ENCODE measurements at regions of chr10 and their contacts with region 1.

Region 1: DNA sequence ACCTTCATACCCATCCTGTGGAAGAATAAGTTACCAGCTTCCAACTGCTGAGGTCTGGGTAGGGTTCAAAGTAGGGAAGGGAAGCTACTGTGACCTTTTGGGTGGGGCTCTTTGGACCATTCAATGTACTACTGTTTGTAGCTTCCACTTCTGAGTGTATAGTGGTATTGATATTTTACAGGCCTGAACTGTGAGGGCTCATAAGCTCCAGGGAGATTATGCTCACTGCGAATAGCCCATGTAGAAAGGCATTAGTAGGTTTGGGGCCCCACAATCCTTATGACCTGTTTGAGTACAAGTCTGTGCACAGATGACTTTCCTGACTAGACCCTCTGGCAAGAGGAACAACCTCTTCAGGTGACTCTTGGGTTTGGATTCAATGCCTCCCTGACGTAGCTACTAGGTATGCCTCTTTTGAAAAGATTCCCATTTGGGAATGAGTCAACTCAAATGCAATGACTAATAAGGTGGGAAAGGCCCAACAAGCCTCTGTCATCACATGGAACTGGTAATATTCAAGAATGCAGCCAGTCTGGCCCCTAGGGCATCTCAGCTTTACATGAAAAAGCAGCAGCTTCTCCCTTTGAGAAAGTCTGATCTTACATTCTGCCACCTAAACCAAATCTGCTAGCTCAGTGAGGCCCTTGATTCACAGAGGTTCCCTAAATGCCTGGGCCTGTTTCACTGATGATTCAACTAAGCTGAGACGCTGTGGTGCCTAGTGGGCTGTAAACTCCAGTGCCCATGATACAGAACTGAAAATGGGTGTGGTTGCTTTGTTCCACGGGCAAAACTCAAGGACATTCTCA is 79.8 kb downstream of the ABI1 start:
- DNase-seq: no peak
- ATAC-seq: peak; percentile 94
- H3K4me3 Mint-ChIP-seq: peak overlapping the region; percentile 72
- H3K27ac Mint-ChIP-seq: peak overlapping the region; percentile 88
- H3K4me1 Mint-ChIP-seq: peaks cover 86% of the 10 kb centered on the region
- H3K27me3 Mint-ChIP-seq: no peaks in the 10 kb centered on the region
- CTCF ChIP-seq: no peak

Region 2: GRCh38 chr10:26799342-26799741 is 18.3 kb after region 1 on chr10:
- CTCF ChIA-PET with region 1: interaction called, 5 read pairs
- POLR2A ChIA-PET with region 1: interaction called, 20 read pairs
- intact Hi-C with region 1: loop called (anchors 1 kb)
- DNase-seq: no peak
- ATAC-seq: peak; percentile 51
- H3K4me3 Mint-ChIP-seq: peak overlapping the region; percentile 65
- H3K27ac Mint-ChIP-seq: peak overlapping the region; percentile 80
- H3K4me1 Mint-ChIP-seq: peaks cover 89% of the 10 kb centered on the region
- H3K27me3 Mint-ChIP-seq: no peaks in the 10 kb centered on the region
- CTCF ChIP-seq: no peak

Region 3: GRCh38 chr10:26805567-26806245 is 24.7 kb after region 1 on chr10:
- CTCF ChIA-PET with region 1: no interaction called
- POLR2A ChIA-PET with region 1: interaction called, 11 read pairs
- intact Hi-C with region 1: no loop called
- DNase-seq: no peak
- ATAC-seq: no peak
- H3K4me3 Mint-ChIP-seq: peak overlapping the region; percentile 2
- H3K27ac Mint-ChIP-seq: peak overlapping the region; percentile 6
- H3K4me1 Mint-ChIP-seq: peaks cover 80% of the 10 kb centered on the region
- H3K27me3 Mint-ChIP-seq: no peaks in the 10 kb centered on the region
- CTCF ChIP-seq: no peak

Region 4: DNA sequence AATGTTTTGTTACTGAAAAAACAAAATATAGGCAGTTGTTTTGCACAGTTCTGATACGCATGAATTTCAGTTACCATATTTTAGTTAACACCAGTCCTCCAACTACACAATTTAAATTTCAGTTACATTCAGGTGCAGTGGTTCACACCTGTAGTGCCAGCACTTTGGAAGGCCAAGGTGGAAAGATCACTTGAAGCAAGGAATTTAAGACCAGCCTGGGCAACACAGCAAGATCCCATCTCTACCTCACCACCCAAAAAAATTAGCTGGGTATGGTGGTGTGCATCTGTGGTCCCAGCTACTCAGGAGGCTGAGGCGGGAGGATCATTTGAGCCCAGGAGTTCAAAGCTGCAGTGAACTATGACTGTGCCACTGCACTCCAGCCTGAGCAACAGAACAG is 34.5 kb after region 1 on chr10:
- CTCF ChIA-PET with region 1: interaction called, 4 read pairs
- POLR2A ChIA-PET with region 1: no interaction called
- intact Hi-C with region 1: loop called (anchors 5 kb)
- DNase-seq: no peak
- ATAC-seq: no peak
- H3K4me3 Mint-ChIP-seq: no peak overlapping the region
- H3K27ac Mint-ChIP-seq: no peak overlapping the region
- H3K4me1 Mint-ChIP-seq: peaks cover 63% of the 10 kb centered on the region
- H3K27me3 Mint-ChIP-seq: no peaks in the 10 kb centered on the region
- CTCF ChIP-seq: no peak